H1 (cell line): ENCODE measurements at regions of chr7 and their contacts with region 1.

Region 1: GRCh38 chr7:1065263-1066260 is 21.2 kb downstream of the GPR146 start:
- DNase-seq: peak; percentile 49 to 96
- H3K4me3 ChIP-seq: peak overlapping the region in 1 of 4 experiments; percentile 24; a peak in 1 of 8 replicates
- H3K27ac ChIP-seq: no peak overlapping the region
- H3K4me1 ChIP-seq: peaks cover 0 to 14% (median 6%) of the 10 kb centered on the region in 4 experiments; a peak in 6 of 7 replicates
- H3K27me3 ChIP-seq: no peaks in the 10 kb centered on the region
- CTCF ChIP-seq: peak in 2 of 3 experiments; percentile 78 to 96; a peak in 3 of 4 replicates
- EP300 ChIP-seq: no peak
- POLR2A ChIP-seq: no peak
- RAD21 ChIP-seq: peak; percentile 88 to 95

Region 2: GRCh38 chr7:985915-986741 is 79.4 kb before region 1 on chr7:
- CTCF ChIA-PET with region 1: interaction called, 76 read pairs
- POLR2A ChIA-PET with region 1: no interaction called
- DNase-seq: no peak
- H3K4me3 ChIP-seq: no peak overlapping the region
- H3K27ac ChIP-seq: no peak overlapping the region
- H3K4me1 ChIP-seq: peaks cover 0 to 5% (median 1%) of the 10 kb centered on the region in 4 experiments; a peak in 3 of 7 replicates
- H3K27me3 ChIP-seq: no peaks in the 10 kb centered on the region
- CTCF ChIP-seq: no peak
- EP300 ChIP-seq: no peak
- POLR2A ChIP-seq: no peak
- RAD21 ChIP-seq: no peak

Region 3: DNA sequence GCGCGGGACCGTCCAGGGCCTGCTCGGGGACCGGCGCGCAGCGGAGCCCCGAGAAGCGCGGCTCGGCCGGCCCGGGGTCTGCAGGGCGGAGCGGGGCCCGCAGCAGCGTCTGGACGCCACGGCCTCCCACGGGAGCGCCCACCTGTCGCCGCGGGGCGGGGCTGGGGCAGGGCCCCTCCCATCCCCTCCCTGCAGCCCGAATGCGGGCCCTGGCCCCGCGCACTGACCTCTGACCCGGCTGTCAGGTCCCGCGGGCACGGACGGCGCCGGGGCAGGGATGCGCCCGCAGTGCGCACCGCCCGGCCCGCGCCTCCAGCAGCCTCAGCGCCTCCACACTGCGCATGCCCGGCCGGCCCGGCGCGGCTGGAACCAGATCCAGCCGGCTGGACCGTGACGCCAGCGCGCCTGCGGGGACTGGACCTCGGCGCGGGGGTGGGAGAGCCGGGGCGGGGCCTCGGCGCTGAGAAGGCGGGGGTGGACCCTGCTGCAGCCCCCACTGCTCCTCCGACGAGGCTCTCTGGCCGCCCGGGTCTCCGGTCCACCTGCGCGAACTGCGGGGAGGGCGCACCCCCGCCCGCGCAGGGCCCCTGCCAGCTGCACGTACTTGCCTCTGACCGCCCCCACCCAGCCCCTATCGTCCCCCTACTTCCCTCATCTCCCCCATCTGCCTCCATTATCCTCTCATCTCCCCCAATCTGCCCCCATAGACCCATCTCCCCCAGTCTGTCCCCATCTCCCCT is 37.4 kb before region 1 on chr7:
- CTCF ChIA-PET with region 1: interaction called, 43 read pairs
- POLR2A ChIA-PET with region 1: interaction called, 6 read pairs
- DNase-seq: peak; percentile 36 to 88
- H3K4me3 ChIP-seq: peak overlapping the region; percentile 42 to 68 (median 48)
- H3K27ac ChIP-seq: no peak overlapping the region; the same call in 1 of the 2 replicates
- H3K4me1 ChIP-seq: peaks cover 0 to 9% (median 3%) of the 10 kb centered on the region in 4 experiments; a peak in 5 of 7 replicates
- H3K27me3 ChIP-seq: no peaks in the 10 kb centered on the region; a peak in 1 of 7 replicates
- CTCF ChIP-seq: no peak
- EP300 ChIP-seq: peak in 1 of 2 experiments; percentile 86; a peak in 1 of 3 replicates
- POLR2A ChIP-seq: peak in 1 of 2 experiments; percentile 61; a peak in 2 of 3 replicates
- RAD21 ChIP-seq: no peak

Region 4: DNA sequence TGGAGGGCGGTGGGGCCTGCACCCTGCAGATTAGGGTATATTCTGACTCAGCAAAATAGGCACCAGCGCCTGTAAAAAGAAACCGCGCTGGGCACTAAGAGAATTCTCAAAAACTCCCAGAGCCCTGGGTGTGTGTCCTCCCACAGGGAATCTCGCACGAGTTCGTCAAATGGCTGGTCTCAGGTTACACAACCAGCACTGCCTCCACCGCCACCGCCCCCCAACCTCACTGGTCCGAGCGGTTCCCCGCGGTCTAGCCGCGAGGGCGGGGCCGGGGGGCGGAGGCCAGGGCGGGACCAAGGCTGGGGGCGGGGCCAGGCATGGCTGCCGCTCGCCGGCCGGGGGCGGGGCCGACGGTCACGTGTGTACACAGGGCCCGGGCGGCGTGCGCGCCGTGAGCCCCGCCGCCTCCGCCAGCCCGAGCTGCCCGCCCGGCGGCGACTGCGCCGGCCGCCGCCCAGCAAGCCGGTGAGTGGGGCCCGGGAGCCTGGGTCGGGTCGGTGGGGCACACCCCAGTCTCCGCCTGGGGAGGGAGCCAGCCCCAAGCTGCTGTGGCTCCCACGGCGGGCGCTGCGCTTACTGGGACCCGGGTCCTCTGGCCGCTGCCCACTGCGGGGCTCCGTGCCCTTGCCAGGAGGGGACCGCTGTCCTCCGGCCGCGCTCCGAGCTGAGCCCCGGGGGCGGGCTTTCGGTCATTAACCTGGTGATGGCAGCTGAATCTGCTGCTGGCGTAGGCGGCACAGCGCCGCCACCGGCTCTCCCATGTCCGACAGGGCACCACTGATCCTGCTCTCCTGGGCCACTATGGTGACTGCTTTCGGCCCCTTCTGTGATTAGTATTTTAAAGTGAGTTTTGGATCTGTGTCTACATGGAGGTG is 21.1 kb before region 1 on chr7 and contains the start of gene GPR146:
- CTCF ChIA-PET with region 1: interaction called, 36 read pairs
- POLR2A ChIA-PET with region 1: interaction called, 3 read pairs
- DNase-seq: peak; percentile 74 to 98
- H3K4me3 ChIP-seq: peak within 1 kb of the TSS; percentile 64 to 77 (median 70)
- H3K27ac ChIP-seq: peak within 1 kb of the TSS; percentile 81
- H3K4me1 ChIP-seq: peaks cover 6 to 17% (median 11%) of the 10 kb centered on the region in 4 experiments
- H3K27me3 ChIP-seq: no peaks in the 10 kb centered on the region
- CTCF ChIP-seq: peak; percentile 64 to 76 (median 74)
- EP300 ChIP-seq: 0 out of 3 replicates have a peak, but pooled peaks of 1 of the 2 experiments have one; percentile 11
- POLR2A ChIP-seq: peak in 1 of 2 experiments; percentile 59; a peak in 2 of 3 replicates
- RAD21 ChIP-seq: peak; percentile 26 to 53; a peak in 3 of 4 replicates
- total RNA-seq, gene GPR146: 0.54 and 1.8 TPM in 2 replicates

Region 5: GRCh38 chr7:1076181-1077072 is 10.9 kb after region 1 on chr7:
- CTCF ChIA-PET with region 1: interaction called, 25 read pairs
- POLR2A ChIA-PET with region 1: no interaction called
- DNase-seq: no peak
- H3K4me3 ChIP-seq: no peak overlapping the region
- H3K27ac ChIP-seq: no peak overlapping the region
- H3K4me1 ChIP-seq: no peaks in the 10 kb centered on the region; a peak in 2 of 7 replicates
- H3K27me3 ChIP-seq: no peaks in the 10 kb centered on the region
- CTCF ChIP-seq: no peak
- EP300 ChIP-seq: no peak
- POLR2A ChIP-seq: no peak
- RAD21 ChIP-seq: no peak

Region 6: DNA sequence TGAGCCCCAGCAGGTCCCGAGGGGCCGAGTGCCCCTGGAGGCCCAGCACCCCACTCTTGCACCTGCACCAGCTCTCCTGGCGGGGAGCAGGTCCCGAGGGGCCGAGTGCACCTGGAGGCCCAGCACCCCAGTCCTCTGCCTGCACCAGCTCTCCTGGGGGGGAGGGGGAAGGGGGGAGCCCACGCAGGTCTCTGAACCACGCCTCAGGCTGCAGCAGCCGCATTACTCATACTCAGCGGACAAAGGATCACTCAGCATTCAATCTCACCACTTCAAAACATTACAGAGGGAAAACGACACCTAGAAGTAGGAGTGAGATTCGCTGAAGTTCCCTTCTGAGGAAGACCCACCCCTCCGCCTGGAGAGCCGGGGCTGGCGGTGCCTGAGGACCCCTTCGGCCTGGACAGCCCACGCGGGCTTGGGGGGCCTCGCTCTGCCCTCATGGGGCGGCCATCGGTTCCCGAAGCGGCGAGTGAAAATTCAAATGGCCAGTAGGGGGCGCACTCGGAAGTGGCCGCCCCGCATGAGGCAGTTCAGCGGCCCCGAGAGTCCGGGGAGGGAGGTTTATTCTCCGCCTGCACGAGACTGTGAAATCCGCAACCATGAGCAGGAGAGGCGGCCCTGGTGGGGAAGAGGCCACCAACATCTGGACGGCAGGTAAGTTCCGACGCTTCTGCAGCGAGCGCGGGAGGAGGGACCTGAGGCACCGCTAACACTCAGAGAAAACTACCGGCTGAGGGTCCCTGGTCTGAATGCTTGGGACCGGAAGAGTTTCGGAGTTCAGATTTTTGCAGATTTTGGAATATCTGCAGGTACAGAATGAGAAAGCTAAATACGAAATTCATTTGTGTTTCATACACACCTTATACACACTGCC is 21.3 kb after region 1 on chr7:
- CTCF ChIA-PET with region 1: interaction called, 25 read pairs
- POLR2A ChIA-PET with region 1: no interaction called
- DNase-seq: peak; percentile 57 to 93
- H3K4me3 ChIP-seq: peak overlapping the region in 3 of 4 experiments; percentile 18 to 51 (median 43); a peak in 5 of 8 replicates
- H3K27ac ChIP-seq: no peak overlapping the region
- H3K4me1 ChIP-seq: peaks cover 2 to 19% (median 4%) of the 10 kb centered on the region in 4 experiments
- H3K27me3 ChIP-seq: no peaks in the 10 kb centered on the region
- CTCF ChIP-seq: peak in 2 of 3 experiments; percentile 71 to 88; a peak in 3 of 4 replicates
- EP300 ChIP-seq: no peak
- POLR2A ChIP-seq: no peak
- RAD21 ChIP-seq: peak; percentile 40 to 55

Region 7: DNA sequence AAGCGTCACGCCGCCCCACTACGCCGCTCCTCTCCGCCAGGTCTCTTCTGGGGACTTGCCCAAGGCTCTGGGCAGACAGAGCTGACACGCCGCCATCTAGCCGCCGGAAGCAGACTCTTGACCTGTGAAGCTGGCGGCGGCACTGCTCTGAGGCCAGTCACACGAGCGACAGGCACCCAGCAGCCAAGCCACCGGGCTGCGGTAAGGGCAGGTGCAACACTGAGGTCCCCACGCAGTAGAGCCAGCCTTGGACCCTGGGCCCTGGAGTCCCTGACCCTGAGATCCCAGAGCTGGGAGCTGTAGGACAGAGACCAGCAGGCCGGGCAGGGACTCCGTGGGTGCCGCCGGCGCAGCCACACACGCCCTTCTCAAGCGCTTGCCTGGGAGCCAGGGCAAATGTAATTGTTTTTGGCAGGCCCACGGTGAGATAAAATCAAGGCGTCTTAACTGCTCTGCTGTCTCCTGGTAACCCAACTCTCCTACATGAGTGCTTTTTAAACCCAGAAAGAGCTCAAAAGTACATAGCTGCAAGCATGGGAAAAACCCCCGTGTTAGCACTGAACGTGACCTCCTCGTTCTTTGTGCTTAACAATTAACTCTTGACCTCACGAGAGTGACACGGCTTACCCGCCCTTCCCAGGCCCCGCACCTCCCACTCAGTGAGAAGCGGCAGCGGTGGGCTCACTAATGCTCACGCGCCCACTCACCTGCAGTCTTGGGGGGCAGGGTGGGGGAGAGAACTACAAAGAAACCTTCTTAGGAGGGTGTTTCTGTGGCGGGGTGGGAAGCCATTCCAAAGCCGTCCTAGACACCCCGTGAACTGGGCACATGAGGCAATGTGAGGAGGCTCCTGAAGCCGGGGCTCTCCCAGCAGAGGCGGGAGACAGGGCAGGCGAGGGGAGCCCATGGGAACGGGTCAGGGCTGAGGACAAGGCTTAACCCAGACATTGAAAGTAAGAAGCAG is 30.9 kb after region 1 on chr7:
- CTCF ChIA-PET with region 1: interaction called, 21 read pairs
- POLR2A ChIA-PET with region 1: no interaction called
- DNase-seq: no peak
- H3K4me3 ChIP-seq: no peak overlapping the region
- H3K27ac ChIP-seq: no peak overlapping the region; the same call in 1 of the 2 replicates
- H3K4me1 ChIP-seq: no peaks in the 10 kb centered on the region; a peak in 1 of 7 replicates
- H3K27me3 ChIP-seq: no peaks in the 10 kb centered on the region
- CTCF ChIP-seq: no peak
- EP300 ChIP-seq: no peak
- POLR2A ChIP-seq: no peak
- RAD21 ChIP-seq: no peak

Region 8: GRCh38 chr7:1131528-1132265 is 66.1 kb after region 1 on chr7:
- CTCF ChIA-PET with region 1: no interaction called
- POLR2A ChIA-PET with region 1: no interaction called
- DNase-seq: no peak
- H3K4me3 ChIP-seq: no peak overlapping the region
- H3K27ac ChIP-seq: no peak overlapping the region
- H3K4me1 ChIP-seq: 0 out of 7 replicates have a peak, but pooled peaks cover 0 to 2% (median 0%) of the 10 kb centered on the region in 4 experiments
- H3K27me3 ChIP-seq: no peaks in the 10 kb centered on the region
- CTCF ChIP-seq: no peak
- EP300 ChIP-seq: no peak
- POLR2A ChIP-seq: no peak
- RAD21 ChIP-seq: no peak

Region 9: DNA sequence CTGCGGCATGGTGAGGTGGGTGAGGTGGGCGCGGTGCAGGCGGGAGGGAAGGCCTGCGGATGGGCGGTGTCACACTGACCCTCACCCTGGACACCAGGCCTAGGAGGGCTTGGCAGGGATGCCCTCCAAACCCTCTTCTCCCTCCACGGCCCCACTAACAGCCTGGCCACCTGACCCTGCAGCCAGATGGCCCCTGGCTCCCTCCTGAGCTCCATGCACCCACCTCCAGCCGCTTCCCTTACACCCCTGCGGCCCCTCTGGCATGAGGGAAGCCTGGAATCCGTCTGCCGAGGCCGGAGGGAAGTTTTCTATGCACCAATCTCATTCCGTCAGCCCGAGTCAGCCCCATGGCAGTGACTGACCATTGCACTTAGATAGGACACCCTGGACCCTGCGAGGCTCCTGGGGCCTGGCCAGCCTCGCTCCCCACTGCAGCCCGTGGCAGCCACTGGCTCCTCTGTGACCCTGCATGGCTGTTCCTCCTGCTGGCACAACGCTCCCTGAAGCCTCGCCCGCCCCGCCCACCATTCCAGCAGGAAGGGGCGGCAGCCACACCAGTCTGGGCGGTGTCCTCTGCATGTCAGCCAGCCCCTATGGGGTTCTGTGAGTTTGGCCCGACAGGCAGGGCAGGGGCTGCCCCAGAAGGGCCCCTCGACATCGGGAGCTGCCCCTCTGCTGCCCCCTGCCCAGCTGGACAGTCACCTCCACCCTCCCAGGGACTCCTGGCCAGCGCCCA is 289.9 kb after region 1 on chr7:
- CTCF ChIA-PET with region 1: no interaction called
- POLR2A ChIA-PET with region 1: no interaction called
- DNase-seq: no peak
- H3K4me3 ChIP-seq: no peak overlapping the region
- H3K27ac ChIP-seq: no peak overlapping the region
- H3K4me1 ChIP-seq: no peaks in the 10 kb centered on the region
- H3K27me3 ChIP-seq: no peaks in the 10 kb centered on the region; a peak in 1 of 7 replicates
- CTCF ChIP-seq: no peak
- EP300 ChIP-seq: no peak
- POLR2A ChIP-seq: no peak
- RAD21 ChIP-seq: 0 out of 4 replicates have a peak, but pooled peaks of 1 of the 2 experiments have one; percentile 1